Activated B cell treated with CpG ODN at 0.5 μM for 24 hours (primary cell): ENCODE measurements at regions of chr17 and their contacts with region 1.

Region 1: GRCh38 chr17:44218344-44219107 is 949 bp downstream of the UBTF start:
- DNase-seq: peak; percentile 89
- ATAC-seq: peak; percentile 46
- H3K4me3 Mint-ChIP-seq: peak overlapping the region; percentile 83
- H3K27ac Mint-ChIP-seq: peak overlapping the region; percentile 94
- H3K4me1 Mint-ChIP-seq: peaks cover 58% of the 10 kb centered on the region
- H3K27me3 Mint-ChIP-seq: no peaks in the 10 kb centered on the region
- CTCF ChIP-seq: no peak

Region 2: GRCh38 chr17:44070455-44071197 is 147.9 kb before region 1 on chr17 and contains the start of gene G6PC3:
- CTCF ChIA-PET with region 1: no interaction called
- POLR2A ChIA-PET with region 1: interaction called, 13 read pairs
- intact Hi-C with region 1: no loop called
- DNase-seq: peak; percentile 73
- ATAC-seq: peak; percentile 73
- H3K4me3 Mint-ChIP-seq: peak within 1 kb of the TSS; percentile 97
- H3K27ac Mint-ChIP-seq: peak within 1 kb of the TSS; percentile 95
- H3K4me1 Mint-ChIP-seq: peaks cover 44% of the 10 kb centered on the region
- H3K27me3 Mint-ChIP-seq: no peaks in the 10 kb centered on the region
- CTCF ChIP-seq: no peak
- total RNA-seq, gene G6PC3: 30.9 and 35.2 TPM in 2 replicates

Region 3: GRCh38 chr17:44186307-44187130 is 32.0 kb before region 1 on chr17 and contains the start of gene TMUB2:
- CTCF ChIA-PET with region 1: interaction called, 3 read pairs
- POLR2A ChIA-PET with region 1: interaction called, 41 read pairs
- intact Hi-C with region 1: loop called (anchors 1 kb)
- DNase-seq: peak; percentile 99
- ATAC-seq: peak; percentile 96
- H3K4me3 Mint-ChIP-seq: peak within 1 kb of the TSS; percentile 99
- H3K27ac Mint-ChIP-seq: peak within 1 kb of the TSS; percentile 99
- H3K4me1 Mint-ChIP-seq: peaks cover 46% of the 10 kb centered on the region
- H3K27me3 Mint-ChIP-seq: no peaks in the 10 kb centered on the region
- CTCF ChIP-seq: no peak
- total RNA-seq, gene TMUB2: 32.3 and 36.0 TPM in 2 replicates

Region 4: GRCh38 chr17:44247440-44247841 is 28.9 kb after region 1 on chr17:
- CTCF ChIA-PET with region 1: no interaction called
- POLR2A ChIA-PET with region 1: interaction called, 30 read pairs
- intact Hi-C with region 1: no loop called
- DNase-seq: no peak
- ATAC-seq: no peak
- H3K4me3 Mint-ChIP-seq: no peak overlapping the region
- H3K27ac Mint-ChIP-seq: no peak overlapping the region
- H3K4me1 Mint-ChIP-seq: peaks cover 41% of the 10 kb centered on the region
- H3K27me3 Mint-ChIP-seq: no peaks in the 10 kb centered on the region
- CTCF ChIP-seq: no peak

Region 5: DNA sequence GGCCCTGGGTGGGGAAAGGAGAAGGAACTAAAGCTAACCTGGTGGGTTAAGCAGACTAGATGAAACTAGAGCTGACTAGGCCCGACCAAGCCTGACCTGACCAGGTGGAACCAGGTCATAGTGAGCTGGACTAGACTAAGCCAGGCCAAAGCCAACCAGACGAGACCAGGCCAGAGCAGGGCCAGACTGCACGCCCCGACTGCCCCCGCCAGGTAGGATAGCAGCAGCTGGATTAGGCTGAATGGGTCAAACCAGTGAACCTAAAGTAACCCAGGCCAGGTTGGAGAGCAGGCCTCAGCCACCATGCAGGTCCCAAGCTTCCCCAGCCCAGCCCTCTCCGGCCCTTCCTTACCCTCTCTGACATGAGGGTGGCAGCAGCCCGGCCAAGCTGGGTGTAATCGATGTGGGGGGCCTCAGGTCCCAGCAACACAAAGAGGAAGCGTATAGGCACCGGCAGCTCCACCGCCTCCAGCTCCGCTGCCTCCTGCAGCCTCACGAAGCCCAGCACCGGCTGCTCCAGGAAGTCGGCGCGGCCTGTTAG is 40.4 kb after region 1 on chr17:
- CTCF ChIA-PET with region 1: no interaction called
- POLR2A ChIA-PET with region 1: no interaction called
- intact Hi-C with region 1: no loop called
- DNase-seq: no peak
- ATAC-seq: no peak
- H3K4me3 Mint-ChIP-seq: no peak overlapping the region
- H3K27ac Mint-ChIP-seq: no peak overlapping the region
- H3K4me1 Mint-ChIP-seq: no peaks in the 10 kb centered on the region
- H3K27me3 Mint-ChIP-seq: peaks cover 9% of the 10 kb centered on the region
- CTCF ChIP-seq: no peak

Region 6: DNA sequence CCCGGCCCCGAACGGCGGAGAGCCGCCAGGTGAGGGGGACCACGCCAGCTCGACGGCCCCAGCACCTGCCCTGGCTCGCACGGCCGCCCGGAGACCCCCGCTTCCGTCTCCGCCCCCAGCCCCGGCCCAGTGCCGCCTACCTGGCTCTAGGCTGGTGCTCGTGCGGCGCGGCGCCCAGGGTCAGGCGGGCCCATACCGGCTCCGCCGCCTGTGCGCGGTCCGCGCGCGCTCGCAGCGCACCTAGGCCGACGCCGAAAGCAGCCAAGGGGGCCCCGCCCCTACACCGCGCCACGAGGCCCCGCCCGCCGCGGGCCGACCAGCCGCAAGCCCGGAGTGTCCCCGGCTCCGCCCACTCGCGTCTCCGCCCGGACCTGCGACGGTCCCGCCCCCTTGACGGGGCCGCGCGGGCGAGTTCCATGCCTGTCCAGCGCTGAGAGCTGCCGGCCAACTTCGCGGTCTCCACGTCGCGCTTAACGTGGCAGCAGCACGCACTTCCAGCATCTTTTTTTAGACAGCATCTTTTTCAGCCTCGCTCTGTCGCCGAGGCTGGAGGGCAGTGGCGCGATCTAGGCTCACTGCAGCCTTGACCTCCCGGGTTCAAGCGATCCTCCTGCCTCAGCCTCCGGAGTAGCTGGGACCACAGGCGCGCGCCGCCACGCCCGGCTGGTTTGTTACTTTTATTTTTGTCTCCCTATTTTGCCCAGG is 106.2 kb after region 1 on chr17 and contains the start of gene SLC25A39:
- CTCF ChIA-PET with region 1: interaction called, 35 read pairs
- POLR2A ChIA-PET with region 1: interaction called, 237 read pairs
- intact Hi-C with region 1: loop called (anchors 1 kb)
- DNase-seq: peak; percentile 99
- ATAC-seq: peak; percentile 74
- H3K4me3 Mint-ChIP-seq: peak within 1 kb of the TSS; percentile 91
- H3K27ac Mint-ChIP-seq: peak within 1 kb of the TSS; percentile 96
- H3K4me1 Mint-ChIP-seq: peaks cover 33% of the 10 kb centered on the region
- H3K27me3 Mint-ChIP-seq: no peaks in the 10 kb centered on the region
- CTCF ChIP-seq: no peak
- total RNA-seq, gene SLC25A39: 119 and 129 TPM in 2 replicates

Region 7: GRCh38 chr17:44350733-44351226 is 132.3 kb after region 1 on chr17:
- CTCF ChIA-PET with region 1: interaction called, 108 read pairs
- POLR2A ChIA-PET with region 1: interaction called, 241 read pairs
- intact Hi-C with region 1: loop called (anchors 1 kb)
- DNase-seq: peak; percentile 71
- ATAC-seq: peak; percentile 42
- H3K4me3 Mint-ChIP-seq: no peak overlapping the region
- H3K27ac Mint-ChIP-seq: peak overlapping the region; percentile 65
- H3K4me1 Mint-ChIP-seq: peaks cover 54% of the 10 kb centered on the region
- H3K27me3 Mint-ChIP-seq: no peaks in the 10 kb centered on the region
- CTCF ChIP-seq: no peak